ENCODE measurements at regions of chr12 and their contacts with region 1.

Region 1: GRCh38 chr12:40312982-40313576 is 88.3 kb downstream of the LRRK2 start:
- ATAC-seq: no peak
- H3K4me3 ChIP-seq: no peak overlapping the region
- H3K27ac ChIP-seq: no peak overlapping the region
- H3K4me1 ChIP-seq: no peaks in the 10 kb centered on the region

Region 2: DNA sequence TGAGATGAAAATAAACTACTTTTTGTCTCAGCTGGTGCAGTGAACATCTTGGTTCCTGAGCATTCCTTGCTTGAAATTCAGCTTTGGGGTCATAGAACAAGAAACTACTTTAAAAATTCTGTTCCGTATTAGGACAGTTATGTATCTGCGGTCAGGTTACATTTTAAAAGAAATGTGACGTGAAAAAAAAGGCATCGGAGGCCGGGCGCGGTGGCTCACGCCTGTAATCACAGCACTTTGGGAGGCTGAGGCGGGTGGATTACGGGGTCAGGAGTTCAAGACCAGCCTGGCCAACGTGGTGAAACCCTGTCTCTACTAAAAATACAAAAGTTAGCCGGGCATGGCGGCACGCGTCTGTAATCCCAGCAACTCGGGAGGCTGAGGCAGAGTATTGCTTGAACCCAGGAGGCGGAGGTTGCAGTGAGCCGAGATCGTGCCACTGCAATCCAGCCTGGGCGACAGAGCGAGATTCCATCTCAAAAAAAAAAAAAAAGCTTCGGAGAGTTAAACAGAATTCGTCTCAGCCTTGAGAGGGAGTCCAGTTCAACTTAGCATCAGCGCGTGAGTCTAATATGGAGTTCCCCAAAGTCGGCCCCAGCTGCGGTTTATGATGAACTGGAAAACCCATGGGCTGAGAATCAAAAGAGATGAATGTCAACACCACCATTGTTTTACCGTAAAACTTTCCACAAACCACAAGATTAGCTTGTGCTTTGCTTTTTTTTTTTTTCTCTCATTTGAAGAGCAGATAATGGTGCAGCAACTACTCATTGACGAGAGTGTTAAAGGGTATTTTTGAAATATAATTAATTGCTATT is 205.1 kb before region 1 on chr12:
- in situ Hi-C with region 1: no loop called
- ATAC-seq: no peak
- H3K4me3 ChIP-seq: no peak overlapping the region
- H3K27ac ChIP-seq: no peak overlapping the region
- H3K4me1 ChIP-seq: peaks cover 5 to 16% of the 10 kb centered on the region in 2 donors

Region 3: DNA sequence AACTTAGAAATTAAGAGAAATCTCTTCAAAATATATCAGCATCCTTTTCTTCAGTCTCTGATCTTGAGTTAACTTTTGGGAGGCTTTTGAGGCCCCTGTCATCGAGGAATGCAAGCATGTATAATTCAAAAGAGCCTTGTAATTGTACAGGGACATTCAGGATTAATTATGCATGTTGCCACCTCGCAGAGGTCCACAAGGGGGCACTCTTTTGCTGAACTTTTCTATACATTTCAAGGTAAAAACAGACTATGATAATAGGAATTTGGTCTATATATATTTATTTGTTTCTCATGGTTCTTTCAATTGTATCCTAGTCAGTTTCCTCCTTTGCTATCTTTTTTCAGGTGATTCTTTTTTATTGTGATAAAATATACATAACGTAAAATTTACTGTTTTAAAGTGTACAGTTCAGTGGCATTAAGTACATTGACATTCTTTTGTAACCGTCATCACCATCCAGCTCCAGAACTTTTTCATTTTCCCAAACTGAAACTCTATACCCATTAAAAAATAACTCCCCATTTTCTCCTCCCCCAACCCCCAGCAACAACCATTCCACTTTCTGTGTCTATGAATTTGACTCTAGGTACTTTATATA is 160.2 kb before region 1 on chr12:
- in situ Hi-C with region 1: loop called in 1 of 9 experiments (anchors 10 kb)
- ATAC-seq: peak in 2 of 8 experiments; percentile 42 to 55
- H3K4me3 ChIP-seq: no peak overlapping the region
- H3K27ac ChIP-seq: no peak overlapping the region
- H3K4me1 ChIP-seq: no peaks in the 10 kb centered on the region

Region 4: GRCh38 chr12:40382217-40382616 is 69.1 kb after region 1 on chr12:
- in situ Hi-C with region 1: no loop called
- ATAC-seq: no peak
- H3K4me3 ChIP-seq: no peak overlapping the region
- H3K27ac ChIP-seq: no peak overlapping the region
- H3K4me1 ChIP-seq: no peaks in the 10 kb centered on the region

Region 5: DNA sequence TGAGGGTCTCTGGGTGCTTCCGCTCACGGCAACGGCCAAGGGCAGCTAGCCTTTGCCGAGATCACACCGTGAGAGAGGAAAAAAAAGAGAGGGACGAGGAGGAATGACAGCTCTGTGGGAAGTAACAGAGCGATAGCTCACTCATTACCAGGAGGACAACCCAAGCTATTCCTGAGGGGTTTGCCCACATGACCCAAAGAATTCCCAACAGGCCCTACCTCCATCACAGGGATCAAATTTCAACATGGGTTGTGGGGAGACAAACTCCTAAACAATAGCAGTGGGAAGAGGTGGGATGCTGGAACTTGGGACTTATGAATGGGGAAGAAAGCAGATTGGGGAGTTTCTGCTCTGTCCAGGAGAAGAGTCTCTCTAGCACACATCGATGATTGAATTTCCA is 92.3 kb after region 1 on chr12:
- in situ Hi-C with region 1: loop called in 1 of 9 experiments (anchors 25 kb)
- ATAC-seq: no peak
- H3K4me3 ChIP-seq: no peak overlapping the region
- H3K27ac ChIP-seq: no peak overlapping the region
- H3K4me1 ChIP-seq: no peaks in the 10 kb centered on the region

Region 6: GRCh38 chr12:40534828-40535227 is 221.7 kb after region 1 on chr12:
- in situ Hi-C with region 1: no loop called
- ATAC-seq: no peak
- H3K4me3 ChIP-seq: no peak overlapping the region
- H3K27ac ChIP-seq: no peak overlapping the region
- H3K4me1 ChIP-seq: no peaks in the 10 kb centered on the region

Region 7: GRCh38 chr12:40697566-40698259 is 384.6 kb after region 1 on chr12:
- in situ Hi-C with region 1: no loop called
- ATAC-seq: peak in 5 of 8 experiments; percentile 71 to 80 (median 77)
- H3K4me3 ChIP-seq: no peak overlapping the region
- H3K27ac ChIP-seq: no peak overlapping the region
- H3K4me1 ChIP-seq: peaks cover 0 to 2% of the 10 kb centered on the region in 2 donors

Measured in motor neuron (in vitro differentiated cells).